Left lung (tissue), 14 donors: ENCODE measurements at regions of chr11 and their contacts with region 1.

Region 1: DNA sequence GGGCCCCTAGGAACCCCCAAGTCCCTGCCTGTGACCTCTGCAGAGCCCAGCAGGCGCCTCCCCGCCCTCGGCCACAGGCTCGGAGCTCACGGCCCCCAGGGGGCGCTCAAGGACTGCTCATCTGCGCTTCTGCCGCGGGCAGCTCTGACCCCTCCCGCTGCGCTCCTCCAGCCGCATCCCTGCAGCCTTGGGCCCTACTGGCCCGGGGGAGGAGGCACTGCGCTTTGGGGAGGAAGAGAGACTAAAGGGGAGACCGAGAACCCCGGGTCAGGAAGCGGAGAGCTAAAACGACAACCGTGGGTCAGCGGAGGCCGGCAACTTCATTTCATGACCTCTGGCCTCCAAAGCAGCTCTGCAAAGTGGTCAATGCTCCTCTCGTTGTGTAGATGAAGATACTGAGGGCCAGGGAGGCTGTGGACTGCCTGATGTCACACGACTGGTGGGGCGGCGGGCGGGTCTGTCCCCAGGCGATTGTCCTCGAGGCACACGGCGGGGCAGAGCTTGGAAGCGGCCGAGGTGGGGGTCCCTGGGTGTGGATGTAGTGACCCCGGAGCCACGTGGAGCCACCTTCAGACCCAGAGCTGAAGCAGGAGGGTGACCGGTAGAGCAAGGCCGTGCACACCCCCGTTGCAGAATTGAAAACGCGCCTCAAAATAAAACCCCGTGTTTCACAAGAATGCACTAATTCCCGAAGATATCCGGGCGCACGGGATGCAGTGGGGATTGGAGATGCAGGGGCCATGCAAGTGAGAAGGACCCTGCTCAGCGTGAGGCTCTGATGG is 2.7 kb upstream of the KRTAP5-6 start:
- DNase-seq: peak; percentile 68 to 98 (median 87)
- ATAC-seq: peak; percentile 99
- H3K4me3 ChIP-seq: peak overlapping the region in 1 of 2 donors; percentile 20
- H3K27ac ChIP-seq: no peak overlapping the region
- H3K4me1 ChIP-seq: peaks cover 5 to 14% of the 10 kb centered on the region in 2 donors
- H3K27me3 ChIP-seq: peaks cover 0 to 28% of the 10 kb centered on the region in 2 donors
- CTCF ChIP-seq: peak; percentile 91 to 99

Region 2: GRCh38 chr11:1832211-1832919 is 138.1 kb after region 1 on chr11:
- intact Hi-C with region 1: loop called in 1 of 2 experiments (anchors 5 kb)
- DNase-seq: peak in 3 of 4 donors; percentile 37 to 94 (median 60)
- ATAC-seq: peak; percentile 45
- H3K4me3 ChIP-seq: peak overlapping the region in 1 of 2 donors; percentile 18
- H3K27ac ChIP-seq: peak overlapping the region in 1 of 2 donors; percentile 23
- H3K4me1 ChIP-seq: peaks cover 25 to 46% of the 10 kb centered on the region in 2 donors
- H3K27me3 ChIP-seq: peaks cover 0 to 60% of the 10 kb centered on the region in 2 donors
- CTCF ChIP-seq: peak; percentile 97 to 99